H1 (cell line): ENCODE measurements at regions of chr11 and their contacts with region 1.

Region 1: GRCh38 chr11:62542750-62543567 is 3.6 kb downstream of the AHNAK start:
- DNase-seq: peak in 1 of 2 experiments; percentile 96
- H3K4me3 ChIP-seq: peak overlapping the region in 2 of 4 experiments; percentile 20 to 45; a peak in 4 of 8 replicates
- H3K27ac ChIP-seq: no peak overlapping the region
- H3K4me1 ChIP-seq: peaks cover 4 to 38% (median 23%) of the 10 kb centered on the region in 4 experiments
- H3K27me3 ChIP-seq: peaks cover 33 to 51% (median 48%) of the 10 kb centered on the region in 4 experiments
- CTCF ChIP-seq: peak in 2 of 3 experiments; percentile 96 to 97; a peak in 3 of 4 replicates
- EP300 ChIP-seq: no peak
- POLR2A ChIP-seq: no peak
- RAD21 ChIP-seq: peak; percentile 91 to 95

Region 2: DNA sequence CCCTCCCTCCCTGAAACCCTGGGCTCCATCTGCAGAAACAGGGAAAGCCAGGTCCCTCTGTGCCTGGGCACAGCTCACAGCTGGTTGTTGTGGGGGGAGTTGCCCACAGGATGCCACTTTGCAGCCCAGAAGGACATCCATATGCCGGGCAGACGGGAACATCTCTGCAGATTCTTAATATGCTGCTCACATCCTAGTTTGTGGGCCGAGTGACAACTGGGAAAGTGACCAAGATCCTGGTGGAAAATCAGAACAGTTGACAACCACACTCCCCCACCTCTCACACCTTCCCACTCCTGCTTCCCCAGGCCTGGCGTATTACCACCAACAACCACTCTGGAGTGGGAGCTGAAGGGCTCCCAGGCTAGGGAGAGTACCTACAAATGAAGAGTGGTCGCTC is 131.4 kb before region 1 on chr11:
- CTCF ChIA-PET with region 1: interaction called, 10 read pairs
- POLR2A ChIA-PET with region 1: interaction called, 3 read pairs
- DNase-seq: no peak
- H3K4me3 ChIP-seq: no peak overlapping the region
- H3K27ac ChIP-seq: no peak overlapping the region
- H3K4me1 ChIP-seq: 0 out of 7 replicates have a peak, but pooled peaks cover 0 to 2% (median 0%) of the 10 kb centered on the region in 4 experiments
- H3K27me3 ChIP-seq: no peaks in the 10 kb centered on the region
- CTCF ChIP-seq: no peak
- EP300 ChIP-seq: no peak
- POLR2A ChIP-seq: no peak
- RAD21 ChIP-seq: no peak

Region 3: GRCh38 chr11:62444236-62444833 is 98.6 kb before region 1 on chr11:
- CTCF ChIA-PET with region 1: interaction called, 21 read pairs
- POLR2A ChIA-PET with region 1: no interaction called
- DNase-seq: no peak
- H3K4me3 ChIP-seq: no peak overlapping the region; a peak in 1 of 8 replicates
- H3K27ac ChIP-seq: no peak overlapping the region
- H3K4me1 ChIP-seq: peaks cover 0 to 6% (median 0%) of the 10 kb centered on the region in 4 experiments; a peak in 2 of 7 replicates
- H3K27me3 ChIP-seq: no peaks in the 10 kb centered on the region
- CTCF ChIP-seq: no peak
- EP300 ChIP-seq: no peak
- POLR2A ChIP-seq: no peak
- RAD21 ChIP-seq: no peak

Region 4: DNA sequence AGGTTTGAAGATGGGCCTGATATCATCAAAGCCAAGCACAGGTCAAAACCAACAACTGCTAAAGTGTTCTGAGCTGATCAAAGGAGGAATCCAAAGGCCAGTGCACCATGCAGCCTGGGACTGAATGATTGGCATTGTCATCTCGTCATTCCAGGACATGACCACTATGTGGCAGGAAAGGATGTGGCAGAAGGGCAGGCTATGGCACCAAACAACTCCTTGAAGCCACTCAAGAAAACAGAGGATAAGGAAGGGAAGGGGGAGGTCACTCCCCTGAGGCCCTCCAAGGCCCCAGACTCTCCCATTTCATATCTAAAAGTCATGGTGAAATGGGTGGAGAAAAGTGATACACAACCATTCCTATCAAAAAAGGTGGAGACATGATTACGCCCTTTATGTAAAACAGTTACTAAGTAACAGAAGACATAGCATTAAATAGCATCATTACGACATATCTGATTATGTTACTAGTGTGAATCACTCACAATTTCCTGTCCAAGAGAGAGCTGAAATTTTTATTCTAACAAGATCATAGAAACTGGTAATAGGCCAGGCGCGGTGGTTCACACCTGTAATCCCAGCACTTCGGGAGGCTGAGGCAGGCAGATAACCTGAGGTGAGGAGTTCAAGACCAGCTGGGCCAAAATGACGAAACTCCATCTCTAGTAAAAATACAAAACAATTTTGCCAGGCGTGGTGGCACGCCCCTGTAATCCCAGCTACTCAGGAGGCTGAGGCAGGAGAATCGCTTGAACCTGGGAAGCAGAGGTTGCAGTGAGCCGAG is 45.6 kb before region 1 on chr11:
- CTCF ChIA-PET with region 1: interaction called, 179 read pairs
- POLR2A ChIA-PET with region 1: interaction called, 3 read pairs
- DNase-seq: no peak
- H3K4me3 ChIP-seq: no peak overlapping the region
- H3K27ac ChIP-seq: no peak overlapping the region
- H3K4me1 ChIP-seq: peaks cover 2 to 11% (median 7%) of the 10 kb centered on the region in 4 experiments; a peak in 6 of 7 replicates
- H3K27me3 ChIP-seq: peaks cover 0 to 4% (median 0%) of the 10 kb centered on the region in 4 experiments; a peak in 3 of 7 replicates
- CTCF ChIP-seq: peak; percentile 67 to 82 (median 70)
- EP300 ChIP-seq: no peak
- POLR2A ChIP-seq: no peak
- RAD21 ChIP-seq: peak; percentile 85 to 88

Region 5: GRCh38 chr11:62556108-62556871 is 13.3 kb after region 1 on chr11:
- CTCF ChIA-PET with region 1: interaction called, 161 read pairs
- POLR2A ChIA-PET with region 1: interaction called, 336 read pairs
- DNase-seq: peak; percentile 63 to 77
- H3K4me3 ChIP-seq: no peak overlapping the region
- H3K27ac ChIP-seq: peak overlapping the region; percentile 67
- H3K4me1 ChIP-seq: peaks cover 32 to 68% (median 39%) of the 10 kb centered on the region in 4 experiments
- H3K27me3 ChIP-seq: no peaks in the 10 kb centered on the region
- CTCF ChIP-seq: no peak
- EP300 ChIP-seq: no peak
- POLR2A ChIP-seq: peak; percentile 20 to 36; a peak in 2 of 3 replicates
- RAD21 ChIP-seq: no peak